CD14-positive monocyte (primary cell): ENCODE measurements at regions of chr16 and their contacts with region 1.

Region 1: GRCh38 chr16:67159593-67160406 is at the starts of genes FBXL8 and TRADD:
- DNase-seq: peak; percentile 59 to 73 (median 62)
- H3K4me3 ChIP-seq: peak within 1 kb of the TSS; percentile 69 to 99 (median 83)
- H3K4me3 Mint-ChIP-seq: peak within 1 kb of the TSS; percentile 91 to 92
- H3K27ac ChIP-seq: peak within 1 kb of the TSS; percentile 67 to 93
- H3K27ac Mint-ChIP-seq: peak within 1 kb of the TSS; percentile 74 to 95 (median 86)
- H3K4me1 ChIP-seq: peaks cover 68 to 79% of the 10 kb centered on the region in 2 donors
- H3K4me1 Mint-ChIP-seq: peaks cover 62% of the 10 kb centered on the region
- H3K27me3 ChIP-seq: peaks cover 26 to 44% of the 10 kb centered on the region in 2 donors
- H3K27me3 Mint-ChIP-seq: peaks cover 44 to 64% (median 60%) of the 10 kb centered on the region in 3 donors
- CTCF ChIP-seq: peak; percentile 42
- polyA plus RNA-seq, gene FBXL8: 3.2 to 27.7 (median 5.2) TPM
- polyA plus RNA-seq, gene TRADD: 26.0 to 46.2 (median 35.8) TPM

Region 2: GRCh38 chr16:66959704-66960161 is 200.1 kb before region 1 on chr16:
- intact Hi-C with region 1: loop called in 1 of 2 experiments (anchors 5 kb)
- DNase-seq: peak; percentile 60 to 73 (median 71)
- H3K4me3 ChIP-seq: peak overlapping the region in 1 of 3 experiments; percentile 47
- H3K4me3 Mint-ChIP-seq: peak overlapping the region; percentile 5 to 73
- H3K27ac ChIP-seq: peak overlapping the region; percentile 54 to 67
- H3K27ac Mint-ChIP-seq: peak overlapping the region; percentile 72 to 93 (median 86)
- H3K4me1 ChIP-seq: peaks cover 54 to 59% of the 10 kb centered on the region in 2 donors
- H3K4me1 Mint-ChIP-seq: peaks cover 55% of the 10 kb centered on the region
- H3K27me3 ChIP-seq: no peaks in the 10 kb centered on the region
- H3K27me3 Mint-ChIP-seq: peaks cover 0 to 3% (median 2%) of the 10 kb centered on the region in 3 donors
- CTCF ChIP-seq: no peak

Region 3: DNA sequence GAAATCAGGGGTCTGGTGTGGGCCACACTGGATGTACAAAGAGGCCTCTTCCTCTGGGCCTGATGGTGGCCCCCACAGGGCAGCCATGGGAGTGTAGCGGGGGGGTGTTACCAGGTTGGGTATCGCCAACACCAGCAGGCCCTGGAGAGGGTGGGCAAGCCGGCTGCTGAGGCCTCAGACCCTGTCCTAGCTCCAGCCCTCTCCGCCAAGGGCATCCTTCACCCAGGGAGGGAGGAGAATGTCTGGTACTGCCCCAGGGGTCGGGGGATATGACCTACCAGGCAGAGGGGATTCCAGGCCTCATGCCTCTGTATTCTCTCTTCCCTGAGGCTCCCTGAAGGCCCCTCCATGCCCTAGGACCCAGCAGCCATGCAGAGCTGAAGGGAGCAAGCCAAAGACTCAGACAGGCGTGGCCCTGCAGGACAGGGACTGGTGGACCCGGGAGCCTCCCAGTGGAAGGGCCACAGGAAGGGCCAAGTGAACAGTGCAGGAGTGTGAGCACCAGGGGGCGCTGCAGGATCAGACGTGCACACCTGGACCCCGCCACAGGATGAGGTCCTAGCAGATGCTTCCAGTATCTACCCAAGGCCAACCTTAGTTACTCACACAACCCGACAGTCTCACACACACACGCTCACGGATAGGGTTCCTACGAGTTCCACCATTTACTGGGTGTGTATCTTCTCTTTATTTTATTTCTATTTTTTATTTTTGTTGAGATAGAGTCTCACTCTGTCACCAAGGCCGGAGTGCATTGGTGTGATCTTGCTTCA is 182.3 kb before region 1 on chr16:
- intact Hi-C with region 1: loop called (anchors 2 kb)
- DNase-seq: peak; percentile 72 to 83 (median 81)
- H3K4me3 ChIP-seq: no peak overlapping the region
- H3K4me3 Mint-ChIP-seq: no peak overlapping the region
- H3K27ac ChIP-seq: no peak overlapping the region
- H3K27ac Mint-ChIP-seq: no peak overlapping the region
- H3K4me1 ChIP-seq: no peaks in the 10 kb centered on the region
- H3K4me1 Mint-ChIP-seq: peaks cover 7% of the 10 kb centered on the region
- H3K27me3 ChIP-seq: peaks cover 0 to 6% of the 10 kb centered on the region in 2 donors
- H3K27me3 Mint-ChIP-seq: peaks cover 17 to 33% (median 20%) of the 10 kb centered on the region in 3 donors
- CTCF ChIP-seq: peak; percentile 97

Region 4: DNA sequence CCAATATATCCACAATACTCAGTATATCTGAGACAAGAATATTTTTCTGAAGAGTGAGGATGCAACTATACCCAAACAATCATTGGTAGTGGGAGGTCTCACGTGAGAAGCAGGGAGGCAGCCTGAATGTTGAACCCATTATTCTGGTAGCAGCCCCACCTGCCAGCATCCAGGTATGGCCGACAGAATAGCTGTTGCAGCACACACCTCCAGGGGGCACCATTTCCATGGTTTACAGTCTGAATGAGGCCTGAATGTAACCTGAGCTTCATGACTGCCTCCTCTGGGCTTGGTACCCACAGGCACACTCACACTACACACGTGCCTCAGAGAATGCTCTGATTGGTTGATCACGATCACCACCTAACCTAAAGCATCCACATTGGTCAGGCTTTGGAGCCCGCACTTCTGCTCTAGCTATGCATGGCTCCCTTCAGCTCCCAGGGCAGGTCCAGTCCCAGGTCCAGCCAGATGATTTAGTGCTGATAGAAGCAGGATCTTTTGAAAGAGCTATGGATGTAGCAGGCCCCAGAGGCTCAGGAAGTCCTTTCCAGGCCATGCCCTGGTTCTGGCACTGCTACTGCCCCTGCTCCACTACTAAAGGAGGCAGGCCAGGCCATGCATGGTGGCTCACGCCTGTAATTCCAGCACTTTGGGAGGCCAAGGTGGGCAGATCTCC is 141.9 kb before region 1 on chr16:
- intact Hi-C with region 1: loop called (anchors 5 kb)
- DNase-seq: peak; percentile 59 to 78 (median 72)
- H3K4me3 ChIP-seq: no peak overlapping the region
- H3K4me3 Mint-ChIP-seq: no peak overlapping the region
- H3K27ac ChIP-seq: no peak overlapping the region
- H3K27ac Mint-ChIP-seq: no peak overlapping the region
- H3K4me1 ChIP-seq: peaks cover 8 to 14% of the 10 kb centered on the region in 2 donors
- H3K4me1 Mint-ChIP-seq: peaks cover 13% of the 10 kb centered on the region
- H3K27me3 ChIP-seq: peaks cover 14 to 28% of the 10 kb centered on the region in 2 donors
- H3K27me3 Mint-ChIP-seq: peaks cover 34 to 38% (median 35%) of the 10 kb centered on the region in 3 donors
- CTCF ChIP-seq: peak; percentile 61

Region 5: GRCh38 chr16:67191995-67192681 is 32.3 kb after region 1 on chr16 and contains the start of gene E2F4:
- intact Hi-C with region 1: loop called in 1 of 2 experiments (anchors 2 kb)
- DNase-seq: peak; percentile 92 to 94 (median 93)
- H3K4me3 ChIP-seq: peak within 1 kb of the TSS; percentile 81 to 99 (median 95)
- H3K4me3 Mint-ChIP-seq: peak within 1 kb of the TSS; percentile 83 to 88
- H3K27ac ChIP-seq: peak within 1 kb of the TSS; percentile 53 to 87
- H3K27ac Mint-ChIP-seq: peak within 1 kb of the TSS; percentile 79 to 88 (median 83)
- H3K4me1 ChIP-seq: peaks cover 18 to 20% of the 10 kb centered on the region in 2 donors
- H3K4me1 Mint-ChIP-seq: peaks cover 30% of the 10 kb centered on the region
- H3K27me3 ChIP-seq: no peaks in the 10 kb centered on the region
- H3K27me3 Mint-ChIP-seq: peaks cover 0 to under 1% (median 0%) of the 10 kb centered on the region in 3 donors
- CTCF ChIP-seq: no peak
- polyA plus RNA-seq, gene E2F4: 53.1 to 191 (median 61.5) TPM

Region 6: DNA sequence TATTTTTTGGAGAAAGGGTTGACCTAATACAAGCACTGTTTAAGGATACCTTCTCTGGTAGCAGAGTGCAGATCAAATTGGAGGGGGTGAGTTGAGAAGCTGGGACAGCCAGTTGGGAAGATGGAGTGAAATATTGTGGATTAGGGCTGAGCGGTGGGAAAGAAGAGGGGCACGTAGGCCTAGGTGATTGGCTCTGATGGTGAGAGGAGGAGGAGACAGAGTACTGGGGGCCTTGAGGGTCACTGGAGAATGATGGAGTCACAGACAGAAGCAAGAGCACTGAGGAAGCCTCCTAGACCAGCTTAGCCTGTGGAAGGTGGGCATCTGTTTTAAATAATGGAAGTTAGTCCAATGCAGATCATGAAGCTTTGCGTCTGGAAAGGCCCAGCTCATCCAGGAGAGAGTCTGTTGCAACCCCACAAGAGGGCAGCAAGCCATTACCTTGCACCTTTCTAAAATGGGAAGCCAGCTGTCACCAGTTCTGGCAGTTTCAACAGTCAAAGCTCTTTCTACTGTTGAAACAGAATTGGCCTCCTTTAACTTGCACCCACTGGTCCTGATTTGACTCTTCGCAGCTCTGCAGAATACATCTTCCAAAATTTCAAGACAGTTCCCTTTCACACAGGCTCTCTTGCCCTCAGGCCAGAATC is 100.8 kb after region 1 on chr16:
- intact Hi-C with region 1: no loop called
- DNase-seq: peak in 1 of 3 donors; percentile 28
- H3K4me3 ChIP-seq: no peak overlapping the region
- H3K4me3 Mint-ChIP-seq: no peak overlapping the region
- H3K27ac ChIP-seq: no peak overlapping the region
- H3K27ac Mint-ChIP-seq: no peak overlapping the region
- H3K4me1 ChIP-seq: no peaks in the 10 kb centered on the region
- H3K4me1 Mint-ChIP-seq: peaks cover 2% of the 10 kb centered on the region
- H3K27me3 ChIP-seq: no peaks in the 10 kb centered on the region
- H3K27me3 Mint-ChIP-seq: peaks cover 5 to 17% (median 6%) of the 10 kb centered on the region in 3 donors
- CTCF ChIP-seq: peak; percentile 34